Activated CD4-positive, alpha-beta memory T cell treated with anti-CD3 and anti-CD28 coated beads for 36 hours (primary cell): ENCODE measurements at regions of chr15 and their contacts with region 1.

Region 1: GRCh38 chr15:51982013-51982769 is 10.6 kb upstream of the LEO1 start:
- DNase-seq: peak; percentile 73
- H3K4me3 Mint-ChIP-seq: peak overlapping the region; percentile 65
- H3K27ac Mint-ChIP-seq: peak overlapping the region; percentile 69
- H3K4me1 Mint-ChIP-seq: peaks cover 13% of the 10 kb centered on the region
- H3K27me3 Mint-ChIP-seq: no peaks in the 10 kb centered on the region

Region 2: GRCh38 chr15:51904931-51905330 is 77.3 kb before region 1 on chr15:
- CTCF ChIA-PET with region 1: no interaction called
- POLR2A ChIA-PET with region 1: no interaction called
- intact Hi-C with region 1: no loop called
- DNase-seq: no peak
- H3K4me3 Mint-ChIP-seq: no peak overlapping the region
- H3K27ac Mint-ChIP-seq: no peak overlapping the region
- H3K4me1 Mint-ChIP-seq: no peaks in the 10 kb centered on the region
- H3K27me3 Mint-ChIP-seq: no peaks in the 10 kb centered on the region

Region 3: GRCh38 chr15:52005748-52006701 is 23.8 kb after region 1 on chr15:
- CTCF ChIA-PET with region 1: no interaction called
- POLR2A ChIA-PET with region 1: no interaction called
- intact Hi-C with region 1: loop called (anchors 1 kb)
- DNase-seq: peak; percentile 60
- H3K4me3 Mint-ChIP-seq: no peak overlapping the region
- H3K27ac Mint-ChIP-seq: peak overlapping the region; percentile 69
- H3K4me1 Mint-ChIP-seq: peaks cover 63% of the 10 kb centered on the region
- H3K27me3 Mint-ChIP-seq: no peaks in the 10 kb centered on the region

Region 4: GRCh38 chr15:52018693-52019387 is 36.6 kb after region 1 on chr15 and contains the start of gene MAPK6:
- CTCF ChIA-PET with region 1: no interaction called
- POLR2A ChIA-PET with region 1: no interaction called
- intact Hi-C with region 1: loop called (anchors 2 kb)
- DNase-seq: peak; percentile 95
- H3K4me3 Mint-ChIP-seq: peak within 1 kb of the TSS; percentile 98
- H3K27ac Mint-ChIP-seq: peak within 1 kb of the TSS; percentile 99
- H3K4me1 Mint-ChIP-seq: peaks cover 39% of the 10 kb centered on the region
- H3K27me3 Mint-ChIP-seq: no peaks in the 10 kb centered on the region
- total RNA-seq, gene MAPK6: 39.9 to 40.8 TPM

Region 5: GRCh38 chr15:52078876-52079700 is 96.9 kb after region 1 on chr15:
- CTCF ChIA-PET with region 1: interaction called, 53 read pairs
- POLR2A ChIA-PET with region 1: no interaction called
- intact Hi-C with region 1: loop called (anchors 1 kb)
- DNase-seq: peak; percentile 87
- H3K4me3 Mint-ChIP-seq: no peak overlapping the region
- H3K27ac Mint-ChIP-seq: no peak overlapping the region
- H3K4me1 Mint-ChIP-seq: peaks cover 13% of the 10 kb centered on the region
- H3K27me3 Mint-ChIP-seq: no peaks in the 10 kb centered on the region

Region 6: DNA sequence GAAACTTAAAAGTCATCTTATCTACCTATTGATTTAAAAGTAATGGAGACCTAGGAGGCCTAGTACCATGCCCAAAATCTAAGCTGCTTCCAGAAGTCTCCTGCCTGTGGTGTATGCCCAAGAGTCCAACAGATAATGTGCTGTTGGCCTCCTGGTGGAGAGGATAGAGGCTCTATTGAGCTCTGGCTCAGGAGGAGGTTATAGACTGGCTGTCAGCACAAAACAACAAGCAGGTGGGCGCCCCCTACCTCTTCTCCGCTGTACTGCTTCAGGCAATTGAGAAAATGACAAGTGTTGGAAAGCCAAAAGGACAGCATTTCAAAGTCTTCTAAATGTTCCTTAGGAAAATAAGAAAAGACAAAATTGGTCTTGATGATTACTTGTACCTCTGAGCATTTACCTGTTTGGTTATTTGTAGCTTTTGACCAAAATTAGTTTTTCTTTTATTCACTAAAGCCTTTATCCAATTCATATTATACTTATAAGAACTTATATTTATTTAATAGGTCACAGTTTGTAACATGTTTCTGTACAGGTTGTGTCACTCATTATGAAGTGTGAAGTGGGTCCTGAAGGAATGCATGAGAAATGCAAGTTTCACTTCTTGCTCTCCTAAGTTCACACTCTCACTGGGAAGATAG is 226.2 kb after region 1 on chr15:
- CTCF ChIA-PET with region 1: no interaction called
- POLR2A ChIA-PET with region 1: no interaction called
- intact Hi-C with region 1: loop called (anchors 1 kb)
- DNase-seq: peak; percentile 86
- H3K4me3 Mint-ChIP-seq: no peak overlapping the region
- H3K27ac Mint-ChIP-seq: no peak overlapping the region
- H3K4me1 Mint-ChIP-seq: no peaks in the 10 kb centered on the region
- H3K27me3 Mint-ChIP-seq: no peaks in the 10 kb centered on the region